Activated T-helper 2 cell treated with anti-CD3 and anti-CD28 coated beads, Interferon-gamma antibody, Interleukin-2, Interleukin-4, amounts not matched to agents 10 μg/mL and 5 μg/mL and 100 μg/mL, durations not matched to agents 14 hours and 24 hours and 36 hours (primary cell): ENCODE measurements at regions of chr4 and their contacts with region 1.

Region 1: DNA sequence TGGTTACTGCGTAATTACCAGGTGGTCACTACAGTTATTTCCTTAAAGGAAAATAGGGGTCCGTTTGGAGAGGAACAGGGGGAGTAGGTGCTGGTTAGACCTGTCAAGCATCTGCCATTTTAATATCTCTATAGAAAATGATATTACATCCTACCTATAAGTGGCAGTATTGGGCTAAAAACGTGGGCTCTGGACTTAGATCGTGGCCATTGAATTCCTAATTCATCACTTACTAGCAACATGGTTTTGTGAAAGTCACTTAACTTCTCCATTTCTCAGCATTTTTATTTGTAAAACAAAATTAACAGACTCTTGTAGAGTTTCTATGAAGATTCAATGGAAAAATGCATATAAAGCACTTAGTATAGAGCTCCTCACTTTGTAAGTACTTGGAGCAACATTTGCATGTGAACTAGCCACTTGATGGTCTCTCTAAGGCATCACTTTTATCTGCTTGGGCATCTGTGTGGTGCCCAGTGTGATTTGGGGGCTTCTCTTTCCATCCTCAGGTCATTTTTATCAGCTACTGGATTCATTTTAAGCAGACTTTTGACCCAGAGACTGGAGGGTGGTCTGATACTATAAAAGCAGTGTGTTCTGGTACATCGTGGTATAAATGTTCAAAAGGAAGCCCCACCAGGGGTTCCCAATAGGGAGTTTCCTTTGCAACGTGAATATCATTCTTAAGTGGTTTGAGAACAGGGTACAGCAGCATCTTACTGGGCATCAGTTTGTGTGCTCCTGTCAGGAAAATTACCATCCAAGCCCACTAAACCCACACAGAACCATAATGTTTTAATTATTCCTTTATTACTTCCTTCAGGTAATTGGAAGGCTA is 42.7 kb upstream of the RASSF6 start:
- DNase-seq: no peak
- H3K4me3 Mint-ChIP-seq: no peak overlapping the region
- H3K27ac Mint-ChIP-seq: no peak overlapping the region
- H3K4me1 Mint-ChIP-seq: peaks cover 5% of the 10 kb centered on the region
- H3K27me3 Mint-ChIP-seq: peaks cover 4% of the 10 kb centered on the region

Region 2: DNA sequence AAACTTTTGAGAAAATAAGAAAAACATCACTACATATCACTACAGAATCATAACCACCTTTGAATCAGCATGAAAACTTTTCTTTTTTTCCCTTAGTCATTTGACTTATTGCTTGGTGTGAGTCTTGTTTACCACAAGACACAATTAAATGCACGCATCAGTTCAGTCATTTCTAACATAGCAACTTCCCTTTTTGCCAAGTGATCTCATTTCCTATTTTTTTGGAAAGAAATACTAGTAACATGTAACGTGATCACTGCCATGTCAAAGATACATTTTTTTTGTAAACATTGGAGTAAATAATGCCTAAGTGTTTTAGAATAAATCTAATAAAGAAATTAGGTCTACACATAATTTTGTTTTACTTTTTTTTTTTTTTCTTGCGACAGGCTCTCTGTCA is 72.3 kb after region 1 on chr4:
- intact Hi-C with region 1: loop called (anchors 5 kb)
- DNase-seq: no peak
- H3K4me3 Mint-ChIP-seq: no peak overlapping the region
- H3K27ac Mint-ChIP-seq: no peak overlapping the region
- H3K4me1 Mint-ChIP-seq: peaks cover 24% of the 10 kb centered on the region
- H3K27me3 Mint-ChIP-seq: no peaks in the 10 kb centered on the region

Region 3: DNA sequence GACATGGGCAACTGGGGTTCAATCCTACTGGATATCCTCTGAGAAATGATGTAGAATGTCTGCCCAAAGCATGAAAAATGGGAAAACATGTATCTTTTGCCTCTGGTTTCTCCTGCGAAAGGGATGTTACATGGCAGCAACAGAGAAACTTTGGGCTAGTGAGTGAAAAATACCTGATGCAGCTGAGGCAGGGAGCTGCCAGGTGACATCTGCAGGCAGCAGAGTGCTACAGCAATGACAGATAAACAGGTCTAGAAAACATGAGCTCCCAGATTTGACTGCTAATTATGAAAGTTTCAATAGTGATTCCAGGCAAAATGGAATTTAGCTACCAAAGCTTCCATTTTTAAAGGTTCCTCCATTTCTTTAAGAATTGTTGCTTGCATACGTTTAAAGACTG is 201.4 kb after region 1 on chr4:
- intact Hi-C with region 1: loop called (anchors 1 kb)
- DNase-seq: no peak
- H3K4me3 Mint-ChIP-seq: no peak overlapping the region
- H3K27ac Mint-ChIP-seq: no peak overlapping the region
- H3K4me1 Mint-ChIP-seq: no peaks in the 10 kb centered on the region
- H3K27me3 Mint-ChIP-seq: peaks cover 14% of the 10 kb centered on the region

Region 4: DNA sequence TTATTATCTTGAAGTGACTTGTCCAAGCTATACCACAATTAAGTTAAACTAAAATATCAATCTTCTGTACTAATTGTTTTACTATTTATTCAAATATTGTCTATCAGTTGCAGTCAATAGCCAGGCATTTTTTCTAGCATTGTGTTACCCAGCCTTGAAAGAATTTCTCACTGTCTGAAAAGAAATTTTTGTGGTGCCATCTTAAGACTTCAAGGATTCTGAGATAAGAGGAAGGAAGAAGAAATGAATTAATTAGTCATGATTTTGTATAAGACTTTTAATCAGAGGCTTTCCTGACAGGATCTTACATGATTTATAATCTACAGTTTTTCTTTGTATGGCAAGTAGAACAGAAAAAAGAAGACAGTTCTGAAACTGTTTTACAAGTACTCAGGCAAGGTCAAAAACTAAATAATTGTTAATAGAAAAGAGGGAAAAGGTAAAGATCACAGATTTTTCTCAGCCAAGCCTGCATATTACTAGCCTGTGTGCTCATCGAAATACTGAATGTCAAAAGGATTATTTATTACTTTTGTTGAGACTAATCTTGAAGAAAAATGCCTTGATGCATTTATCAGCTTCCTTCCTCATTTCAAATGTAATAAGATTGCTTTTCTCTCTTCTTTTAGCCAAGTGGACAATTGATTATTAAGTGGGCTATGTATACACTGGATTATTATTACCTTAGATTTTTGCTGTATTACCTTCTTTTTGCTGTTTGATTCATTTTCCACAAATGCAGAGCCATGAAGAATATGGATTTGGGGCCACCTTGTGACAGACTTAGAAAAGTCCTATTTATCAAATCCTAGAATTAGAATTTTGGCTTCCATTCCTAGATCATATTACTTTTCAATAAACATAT is 260.1 kb after region 1 on chr4:
- intact Hi-C with region 1: loop called (anchors 5 kb)
- DNase-seq: no peak
- H3K4me3 Mint-ChIP-seq: no peak overlapping the region
- H3K27ac Mint-ChIP-seq: no peak overlapping the region
- H3K4me1 Mint-ChIP-seq: no peaks in the 10 kb centered on the region
- H3K27me3 Mint-ChIP-seq: no peaks in the 10 kb centered on the region

Region 5: GRCh38 chr4:74016068-74016467 is 353.1 kb after region 1 on chr4:
- intact Hi-C with region 1: loop called (anchors 10 kb)
- DNase-seq: no peak
- H3K4me3 Mint-ChIP-seq: no peak overlapping the region
- H3K27ac Mint-ChIP-seq: peak overlapping the region; percentile 69
- H3K4me1 Mint-ChIP-seq: peaks cover 24% of the 10 kb centered on the region
- H3K27me3 Mint-ChIP-seq: no peaks in the 10 kb centered on the region

Region 6: GRCh38 chr4:74133786-74134499 is 471.0 kb after region 1 on chr4:
- intact Hi-C with region 1: loop called (anchors 1 kb)
- DNase-seq: peak; percentile 14
- H3K4me3 Mint-ChIP-seq: no peak overlapping the region
- H3K27ac Mint-ChIP-seq: no peak overlapping the region
- H3K4me1 Mint-ChIP-seq: no peaks in the 10 kb centered on the region
- H3K27me3 Mint-ChIP-seq: peaks cover 13% of the 10 kb centered on the region